Prostate gland (tissue), 2 donors: ENCODE measurements at regions of chr6 and their contacts with region 1.

Region 1: GRCh38 chr6:121436960-121437850 is 1.8 kb downstream of the GJA1 start:
- DNase-seq: peak; percentile 40
- H3K4me3 ChIP-seq: peak overlapping the region; percentile 42 to 47
- H3K27ac ChIP-seq: peak overlapping the region; percentile 79 to 80
- H3K4me1 ChIP-seq: no peaks in the 10 kb centered on the region
- H3K27me3 ChIP-seq: no peaks in the 10 kb centered on the region
- CTCF ChIP-seq: no peak
- POLR2A ChIP-seq: peak; percentile 4

Region 2: GRCh38 chr6:120395784-120396183 is 1041.4 kb before region 1 on chr6:
- intact Hi-C with region 1: no loop called
- DNase-seq: no peak
- H3K4me3 ChIP-seq: no peak overlapping the region
- H3K27ac ChIP-seq: no peak overlapping the region
- H3K4me1 ChIP-seq: no peaks in the 10 kb centered on the region
- H3K27me3 ChIP-seq: no peaks in the 10 kb centered on the region
- CTCF ChIP-seq: no peak
- POLR2A ChIP-seq: no peak

Region 3: DNA sequence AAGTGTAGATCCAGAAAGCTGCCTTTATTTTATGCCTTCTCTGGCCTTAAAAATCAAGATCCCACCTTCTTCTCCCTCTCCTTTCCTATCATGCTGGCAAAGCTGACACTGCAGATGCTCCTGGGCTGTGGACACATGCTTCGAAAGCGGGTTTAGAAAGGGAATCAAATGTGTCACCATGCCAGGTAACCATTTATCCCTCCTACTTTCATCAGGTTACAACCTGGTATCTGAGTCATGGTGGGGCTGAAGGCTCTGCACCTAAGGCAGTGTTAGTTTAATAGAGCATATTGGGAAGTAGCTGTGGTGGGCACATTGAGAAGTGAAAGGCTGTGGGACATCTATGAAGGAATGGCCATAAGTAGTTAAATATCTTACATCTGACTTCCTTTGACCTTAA is 68.1 kb after region 1 on chr6:
- intact Hi-C with region 1: no loop called
- DNase-seq: no peak
- H3K4me3 ChIP-seq: no peak overlapping the region
- H3K27ac ChIP-seq: peak overlapping the region in 1 of 2 donors; percentile 55
- H3K4me1 ChIP-seq: no peaks in the 10 kb centered on the region
- H3K27me3 ChIP-seq: no peaks in the 10 kb centered on the region
- CTCF ChIP-seq: no peak
- POLR2A ChIP-seq: no peak

Region 4: DNA sequence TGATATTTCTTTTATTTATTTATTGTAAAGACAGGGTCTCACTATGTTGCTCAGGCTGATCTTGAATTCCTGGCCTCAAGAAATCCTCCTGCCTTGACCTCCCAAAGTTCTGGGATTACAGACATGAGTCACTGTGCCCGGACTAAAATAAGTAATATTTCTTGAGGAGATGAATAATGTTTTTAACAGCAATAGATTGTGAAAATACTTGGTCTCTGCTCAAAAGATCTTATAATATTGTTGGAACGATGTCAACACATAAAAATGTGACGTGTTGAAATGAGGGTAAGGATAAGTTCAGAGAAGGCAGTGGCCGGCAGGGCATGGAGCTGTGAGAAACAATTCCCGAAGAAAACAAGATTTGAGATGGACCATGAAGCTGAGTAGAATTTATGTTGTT is 176.9 kb after region 1 on chr6:
- intact Hi-C with region 1: loop called (anchors 5 kb)
- DNase-seq: no peak
- H3K4me3 ChIP-seq: no peak overlapping the region
- H3K27ac ChIP-seq: no peak overlapping the region
- H3K4me1 ChIP-seq: no peaks in the 10 kb centered on the region
- H3K27me3 ChIP-seq: no peaks in the 10 kb centered on the region
- CTCF ChIP-seq: no peak
- POLR2A ChIP-seq: no peak